Heart right ventricle (tissue), 16 donors: ENCODE measurements at regions of chr7 and their contacts with region 1.

Region 1: GRCh38 chr7:149010451-149011010 is 17.8 kb downstream of the PDIA4 start:
- DNase-seq: no peak
- ATAC-seq: no peak
- H3K4me3 ChIP-seq: no peak overlapping the region
- H3K27ac ChIP-seq: no peak overlapping the region
- H3K4me1 ChIP-seq: peaks cover 0 to 4% (median 0%) of the 10 kb centered on the region in 9 donors
- H3K27me3 ChIP-seq: no peaks in the 10 kb centered on the region
- CTCF ChIP-seq: no peak

Region 2: DNA sequence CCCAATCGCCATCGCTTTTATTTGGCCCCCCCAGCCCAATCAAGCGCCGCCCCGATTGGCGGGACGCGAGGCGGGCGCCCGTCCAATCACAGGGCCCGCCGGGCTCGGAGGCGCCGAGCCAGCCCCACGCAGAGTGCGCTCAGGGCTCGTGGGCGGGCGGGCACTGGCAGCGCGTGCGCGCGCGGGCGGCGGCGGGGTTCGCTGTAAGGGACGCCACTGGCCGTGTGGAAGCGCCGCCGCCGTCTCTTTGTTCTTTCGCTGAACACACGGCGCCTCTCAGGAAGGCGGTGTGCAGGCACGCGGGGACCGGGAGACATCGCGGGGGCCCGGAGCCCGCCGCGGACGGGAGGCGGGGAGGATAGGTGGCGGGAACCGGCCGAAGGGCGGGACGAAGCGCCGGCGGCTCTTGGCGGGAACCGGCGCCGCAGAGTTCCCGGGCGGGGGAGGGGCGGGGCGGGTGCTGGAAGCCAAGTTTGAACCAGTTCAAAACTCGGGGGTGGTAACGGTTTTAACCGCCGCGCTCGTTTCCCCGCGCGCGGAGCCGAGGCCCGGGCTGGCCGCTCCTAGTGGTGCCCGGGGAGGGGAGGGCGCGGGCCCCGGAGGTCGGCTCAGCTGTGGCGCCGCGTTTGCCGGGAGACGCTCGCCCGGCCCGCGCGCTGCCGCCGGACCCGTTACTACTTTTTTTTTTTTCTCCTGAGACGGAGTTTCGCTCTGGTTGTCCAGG is 126.1 kb before region 1 on chr7:
- intact Hi-C with region 1: no loop called
- DNase-seq: peak; percentile 93 to 94
- ATAC-seq: peak; percentile 99 to 100 (median 100)
- H3K4me3 ChIP-seq: peak overlapping the region; percentile 50 to 97 (median 94)
- H3K27ac ChIP-seq: peak overlapping the region; percentile 73 to 96 (median 93)
- H3K4me1 ChIP-seq: peaks cover 0 to 19% (median 8%) of the 10 kb centered on the region in 9 donors
- H3K27me3 ChIP-seq: no peaks in the 10 kb centered on the region
- CTCF ChIP-seq: peak in 1 of 9 donors; percentile 20

Region 3: GRCh38 chr7:148972375-148972774 is 38.2 kb before region 1 on chr7:
- intact Hi-C with region 1: no loop called
- DNase-seq: no peak
- ATAC-seq: peak in 2 of 8 donors; percentile 22 to 47
- H3K4me3 ChIP-seq: no peak overlapping the region
- H3K27ac ChIP-seq: no peak overlapping the region
- H3K4me1 ChIP-seq: no peaks in the 10 kb centered on the region
- H3K27me3 ChIP-seq: peaks cover 0 to 18% (median 0%) of the 10 kb centered on the region in 7 donors
- CTCF ChIP-seq: no peak

Region 4: GRCh38 chr7:149081914-149082313 is 71.4 kb after region 1 on chr7:
- intact Hi-C with region 1: loop called in 1 of 10 experiments (anchors 5 kb)
- DNase-seq: no peak
- ATAC-seq: no peak
- H3K4me3 ChIP-seq: no peak overlapping the region
- H3K27ac ChIP-seq: no peak overlapping the region
- H3K4me1 ChIP-seq: peaks cover 0 to 10% (median 0%) of the 10 kb centered on the region in 9 donors
- H3K27me3 ChIP-seq: no peaks in the 10 kb centered on the region
- CTCF ChIP-seq: no peak